Heart right ventricle (tissue), 16 donors: ENCODE measurements at regions of chr12 and their contacts with region 1.

Region 1: GRCh38 chr12:31659087-31659933 is at the start of gene ETFBKMT:
- DNase-seq: peak; percentile 84 to 89
- ATAC-seq: peak; percentile 93 to 97 (median 96)
- H3K4me3 ChIP-seq: peak within 1 kb of the TSS; percentile 30 to 78 (median 67)
- H3K27ac ChIP-seq: peak within 1 kb of the TSS; percentile 83 to 98 (median 94)
- H3K4me1 ChIP-seq: peaks cover 0 to 19% (median 11%) of the 10 kb centered on the region in 9 donors
- H3K27me3 ChIP-seq: no peaks in the 10 kb centered on the region
- CTCF ChIP-seq: peak in 8 of 9 donors; percentile 23 to 74 (median 50)
- total RNA-seq, gene ETFBKMT: 5.5 to 8.7 (median 6.2) TPM

Region 2: DNA sequence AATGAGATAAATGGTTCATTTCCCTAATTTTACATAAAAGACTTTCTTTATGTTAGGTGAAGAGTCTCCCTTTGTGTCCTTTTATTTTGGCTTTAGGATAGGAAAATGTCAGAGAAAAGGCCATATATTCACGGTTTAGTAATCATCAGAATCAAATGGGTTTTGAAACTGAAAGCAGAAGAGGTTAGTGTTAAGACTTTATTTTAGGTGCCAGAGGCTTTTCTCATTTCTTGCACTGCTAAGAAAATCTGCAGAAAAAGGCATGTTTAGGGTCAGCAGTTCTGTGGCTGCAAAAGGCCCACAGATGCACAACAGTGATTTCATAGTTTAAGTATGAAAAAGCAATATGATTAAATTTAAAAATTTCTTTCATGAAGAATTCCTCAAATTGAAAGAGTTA is 253.0 kb before region 1 on chr12:
- intact Hi-C with region 1: no loop called
- DNase-seq: no peak
- ATAC-seq: no peak
- H3K4me3 ChIP-seq: no peak overlapping the region
- H3K27ac ChIP-seq: no peak overlapping the region
- H3K4me1 ChIP-seq: peaks cover 0 to 12% (median 0%) of the 10 kb centered on the region in 9 donors
- H3K27me3 ChIP-seq: no peaks in the 10 kb centered on the region
- CTCF ChIP-seq: no peak

Region 3: DNA sequence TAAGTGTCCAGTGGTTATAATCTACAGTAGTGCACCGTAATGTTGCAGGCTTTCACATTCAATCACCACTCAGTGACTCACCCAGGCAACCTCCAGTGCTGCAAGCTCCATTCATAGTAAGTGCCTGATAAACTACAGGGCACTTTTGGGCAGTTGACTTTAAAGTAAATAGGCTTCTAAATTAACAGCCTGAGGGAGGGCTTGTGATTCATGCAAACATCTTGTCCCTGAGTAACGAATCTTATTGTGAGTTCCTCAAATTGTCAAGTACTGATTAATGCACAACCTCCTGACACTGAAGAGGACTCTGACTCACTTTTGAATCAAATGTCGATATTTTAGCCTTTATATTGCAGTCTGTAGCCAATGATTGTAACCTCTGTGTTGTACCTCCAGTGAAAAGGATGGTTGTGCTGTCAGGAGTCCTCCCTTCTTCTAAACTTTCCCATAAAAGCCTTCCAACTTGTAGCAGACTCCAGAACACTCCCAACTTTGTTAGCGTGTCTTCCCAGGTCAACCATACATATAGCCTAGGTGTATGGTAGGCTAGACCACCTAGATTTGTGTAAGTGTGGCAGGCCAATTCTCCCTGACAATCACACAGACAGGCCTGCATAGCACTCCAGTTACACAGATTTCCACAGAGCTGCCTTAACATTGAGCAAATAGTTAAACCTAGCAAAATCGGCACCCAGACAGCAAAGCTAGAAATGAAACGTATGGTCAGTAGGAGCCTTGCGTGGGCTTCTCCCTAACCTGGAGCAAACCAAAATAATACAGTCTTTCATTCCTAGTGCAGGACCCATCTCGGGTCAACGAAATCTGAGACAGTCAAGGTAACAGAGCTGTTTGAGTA is 392.5 kb after region 1 on chr12:
- intact Hi-C with region 1: loop called in 2 of 10 experiments (anchors 10 kb)
- DNase-seq: no peak
- ATAC-seq: peak in 7 of 8 donors; percentile 16 to 94 (median 84)
- H3K4me3 ChIP-seq: no peak overlapping the region
- H3K27ac ChIP-seq: peak overlapping the region in 1 of 10 donors; percentile 18
- H3K4me1 ChIP-seq: peaks cover 0 to 14% (median 4%) of the 10 kb centered on the region in 9 donors
- H3K27me3 ChIP-seq: no peaks in the 10 kb centered on the region
- CTCF ChIP-seq: no peak

Region 4: GRCh38 chr12:32106517-32107358 is 447.4 kb after region 1 on chr12 and contains the start of gene BICD1:
- intact Hi-C with region 1: loop called in 1 of 10 experiments (anchors 10 kb)
- DNase-seq: peak; percentile 92
- ATAC-seq: peak; percentile 97 to 99 (median 97)
- H3K4me3 ChIP-seq: peak within 1 kb of the TSS; percentile 79 to 99 (median 94)
- H3K27ac ChIP-seq: peak within 1 kb of the TSS; percentile 75 to 95 (median 90)
- H3K4me1 ChIP-seq: peaks cover 0 to 47% (median 30%) of the 10 kb centered on the region in 9 donors
- H3K27me3 ChIP-seq: no peaks in the 10 kb centered on the region
- CTCF ChIP-seq: peak in 8 of 9 donors; percentile 30 to 73 (median 43)
- total RNA-seq, gene BICD1: 4.7 to 14.7 (median 9.6) TPM

Region 5: DNA sequence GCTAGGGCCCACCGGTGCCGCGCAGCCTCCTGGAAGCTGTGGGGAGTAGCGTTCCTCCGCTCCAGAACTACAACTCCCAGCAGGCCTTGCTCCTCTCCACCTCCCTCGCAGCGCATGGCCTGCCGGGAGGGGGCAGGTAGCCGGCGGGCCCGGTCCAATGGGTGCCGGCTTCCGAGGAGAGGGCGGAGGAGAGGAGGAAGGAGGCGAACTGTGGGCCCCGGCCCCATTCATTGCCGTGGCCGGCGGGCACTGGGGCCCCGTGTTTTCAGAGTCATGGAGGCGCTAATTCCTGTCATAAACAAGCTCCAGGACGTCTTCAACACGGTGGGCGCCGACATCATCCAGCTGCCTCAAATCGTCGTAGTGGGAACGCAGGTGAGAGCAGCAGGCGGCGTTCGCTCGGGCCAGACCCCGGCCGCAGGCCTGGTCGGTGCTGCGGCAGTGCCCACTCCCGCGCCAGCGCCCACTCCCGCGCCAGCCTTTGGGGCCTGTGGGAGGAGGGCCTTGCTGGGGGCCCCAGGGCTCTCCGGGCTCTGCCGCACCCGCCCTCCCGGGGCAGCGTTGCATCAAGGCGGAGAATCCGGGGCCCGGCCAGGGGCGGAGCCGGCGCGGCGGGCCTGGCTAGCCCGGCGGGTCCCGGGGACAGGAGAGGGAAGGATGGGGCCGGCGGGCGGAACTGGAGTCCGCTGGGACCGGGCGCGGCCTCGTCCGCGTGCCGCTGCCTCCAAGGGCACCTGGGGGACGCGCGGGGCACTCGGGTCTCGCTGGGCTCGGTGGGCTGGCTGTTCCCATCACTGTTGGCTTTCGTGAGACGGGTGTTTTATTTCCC is 1020.0 kb after region 1 on chr12 and contains the start of gene DNM1L:
- intact Hi-C with region 1: loop called in 4 of 10 experiments (anchors 10 kb)
- DNase-seq: peak; percentile 93 to 95
- ATAC-seq: peak; percentile 98 to 99 (median 99)
- H3K4me3 ChIP-seq: peak within 1 kb of the TSS; percentile 47 to 100 (median 90)
- H3K27ac ChIP-seq: peak within 1 kb of the TSS; percentile 80 to 97 (median 94)
- H3K4me1 ChIP-seq: peaks cover 0 to 24% (median 12%) of the 10 kb centered on the region in 9 donors
- H3K27me3 ChIP-seq: no peaks in the 10 kb centered on the region
- CTCF ChIP-seq: peak in 7 of 9 donors; percentile 7 to 35 (median 21)
- total RNA-seq, gene DNM1L: 52.6 to 81.5 (median 59.0) TPM